Left ventricle myocardium superior (tissue), 1 donor: ENCODE measurements at regions of chr20 and their contacts with region 1.

Region 1: DNA sequence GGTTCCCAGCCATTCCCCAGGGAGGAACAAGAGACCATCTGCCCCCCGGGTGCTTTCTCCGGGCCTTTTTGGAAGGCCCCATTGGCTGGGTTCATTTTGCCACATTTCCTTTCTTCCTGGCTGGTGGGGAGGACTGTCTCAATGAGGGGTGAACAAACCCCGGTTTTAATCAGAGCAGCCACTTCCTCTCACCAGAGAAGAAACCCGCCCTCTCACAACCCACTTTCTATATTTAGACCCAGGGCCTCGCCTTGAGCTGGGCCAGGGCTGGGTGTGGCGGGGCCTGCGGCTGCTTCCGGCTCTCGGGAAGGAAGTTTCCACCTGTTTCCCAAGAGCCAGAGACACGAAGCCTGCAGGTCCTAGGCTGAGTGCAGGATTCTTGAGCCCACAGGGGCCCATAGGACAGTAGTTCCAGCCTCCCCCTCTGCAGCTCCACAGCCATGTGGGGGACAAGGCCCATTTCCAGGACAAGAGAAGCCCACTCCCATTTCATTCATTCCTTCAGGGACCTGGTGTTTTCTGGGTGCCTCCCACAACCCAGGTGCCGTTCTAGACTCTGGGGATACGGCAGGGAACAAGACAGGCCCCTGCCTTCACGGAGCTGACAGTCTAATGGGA is 41.8 kb downstream of the RBM38 start:
- DNase-seq: peak; percentile 75
- ATAC-seq: peak; percentile 80

Region 2: DNA sequence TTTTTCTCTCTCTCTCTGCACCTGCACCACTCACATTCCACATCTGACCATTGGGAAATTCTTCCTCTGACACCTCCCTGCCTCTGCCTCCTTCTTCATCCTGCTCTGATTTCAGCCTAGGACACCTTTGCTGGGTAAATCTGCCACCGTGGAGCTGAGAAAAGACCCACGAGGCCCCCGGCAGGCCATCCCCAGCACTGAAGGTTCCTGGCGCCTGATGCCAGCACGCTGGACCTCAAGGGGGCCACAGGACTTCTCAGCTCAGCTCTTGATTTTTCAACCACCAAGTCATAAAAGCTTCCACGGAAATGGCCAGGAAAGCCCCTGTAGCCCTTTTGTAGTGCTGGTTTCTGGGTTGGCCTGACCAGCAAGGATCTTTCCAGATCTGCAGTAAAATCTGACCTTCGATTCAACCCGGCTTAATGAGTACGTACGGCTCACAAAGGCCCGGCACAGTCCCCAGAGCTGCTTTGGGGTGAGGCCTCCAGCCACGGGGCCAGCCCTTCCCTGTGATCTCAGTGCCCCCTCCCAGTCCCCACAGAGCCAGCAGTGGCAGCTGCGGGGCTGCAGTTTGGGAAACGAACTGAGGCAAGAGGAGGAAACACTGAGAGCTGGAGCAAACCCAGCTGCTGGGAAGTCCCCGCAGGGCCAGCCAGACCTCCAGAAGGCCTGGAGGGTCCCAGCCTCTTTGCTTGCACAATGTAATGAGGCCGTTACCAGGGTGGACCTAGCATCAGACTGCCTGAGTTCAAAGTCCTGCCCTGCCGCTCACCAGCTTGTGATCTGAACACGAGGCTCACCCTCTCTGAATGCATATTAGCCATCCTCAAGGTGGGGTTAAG is 324.0 kb before region 1 on chr20:
- intact Hi-C with region 1: no loop called
- DNase-seq: no peak
- ATAC-seq: peak; percentile 40

Region 3: GRCh38 chr20:57388953-57389694 is 43.9 kb before region 1 on chr20:
- intact Hi-C with region 1: loop called (anchors 10 kb)
- DNase-seq: peak; percentile 92
- ATAC-seq: peak; percentile 80